HCT116 (cell line): ENCODE measurements at regions of chr9 and their contacts with region 1.

Region 1: GRCh38 chr9:83219152-83219923 is 156.4 kb upstream of the RASEF start:
- DNase-seq: peak; percentile 47
- ATAC-seq: peak; percentile 97
- H3K4me3 ChIP-seq: peak overlapping the region; percentile 54 to 66
- H3K27ac ChIP-seq: no peak overlapping the region
- H3K4me1 ChIP-seq: peaks cover 3 to 18% of the 10 kb centered on the region in 2 experiments; a peak in 2 of 4 replicates
- H3K27me3 ChIP-seq: peaks cover 9% of the 10 kb centered on the region; the same call in 1 of the 2 replicates
- CTCF ChIP-seq: peak; percentile 53 to 57 (median 56); a peak in 5 of 6 replicates
- POLR2A ChIP-seq: no peak
- RAD21 ChIP-seq: peak; percentile 67

Region 2: GRCh38 chr9:83231033-83231432 is 11.7 kb after region 1 on chr9:
- CTCF ChIA-PET with region 1: interaction called, 30 read pairs
- POLR2A ChIA-PET with region 1: no interaction called
- RAD21 ChIA-PET with region 1: interaction called in 1 of 2 experiments, 4 read pairs
- intact Hi-C with region 1: no loop called
- DNase-seq: peak; percentile 40
- ATAC-seq: peak; percentile 87
- H3K4me3 ChIP-seq: no peak overlapping the region
- H3K27ac ChIP-seq: no peak overlapping the region
- H3K4me1 ChIP-seq: no peaks in the 10 kb centered on the region
- H3K27me3 ChIP-seq: no peaks in the 10 kb centered on the region
- CTCF ChIP-seq: peak; percentile 63 to 92 (median 67)
- POLR2A ChIP-seq: no peak
- RAD21 ChIP-seq: peak; percentile 36

Region 3: DNA sequence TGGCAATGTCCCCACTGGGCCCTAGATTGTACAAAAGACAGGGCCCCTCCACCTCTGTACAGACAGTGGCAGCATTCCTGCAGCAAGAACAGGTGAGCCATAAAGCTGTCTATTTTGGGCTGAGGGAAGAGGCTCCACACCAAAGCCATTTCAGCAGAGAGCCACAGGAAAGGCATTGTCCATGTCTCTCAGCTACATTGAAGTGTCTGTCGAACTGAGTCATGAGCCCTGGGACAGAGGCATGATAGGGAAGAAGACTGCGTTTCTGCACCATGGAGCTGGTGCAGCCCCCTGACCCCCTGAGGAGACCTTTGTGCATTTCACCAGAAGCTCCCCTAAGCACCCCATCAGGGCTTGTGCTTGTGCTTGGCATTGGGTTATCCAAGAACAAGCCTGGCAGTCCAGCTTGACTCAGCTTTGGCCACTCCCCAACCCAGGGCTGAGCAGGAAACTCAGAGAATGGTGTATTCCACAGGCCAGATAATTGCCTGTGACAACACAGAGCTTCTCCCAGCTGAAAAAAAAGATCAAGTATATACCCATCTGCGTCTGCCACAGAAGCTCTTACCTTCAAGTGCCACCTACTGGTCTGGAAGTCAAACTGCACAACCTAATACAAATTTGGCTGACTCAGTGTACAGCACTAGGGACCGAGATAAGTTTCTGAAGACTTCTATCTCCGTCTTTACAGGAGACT is 324.8 kb after region 1 on chr9:
- CTCF ChIA-PET with region 1: interaction called, 15 read pairs
- POLR2A ChIA-PET with region 1: no interaction called
- RAD21 ChIA-PET with region 1: interaction called in 1 of 2 experiments, 3 read pairs
- intact Hi-C with region 1: loop called (anchors 5 kb)
- DNase-seq: peak; percentile 42
- ATAC-seq: peak; percentile 99
- H3K4me3 ChIP-seq: no peak overlapping the region
- H3K27ac ChIP-seq: no peak overlapping the region
- H3K4me1 ChIP-seq: peaks cover 0 to under 1% of the 10 kb centered on the region in 2 experiments; a peak in 2 of 4 replicates
- H3K27me3 ChIP-seq: no peaks in the 10 kb centered on the region
- CTCF ChIP-seq: peak; percentile 56 to 78 (median 70); a peak in 5 of 6 replicates
- POLR2A ChIP-seq: no peak
- RAD21 ChIP-seq: peak; percentile 74

Region 4: GRCh38 chr9:83596896-83597504 is 377.7 kb after region 1 on chr9:
- CTCF ChIA-PET with region 1: interaction called, 3 read pairs
- POLR2A ChIA-PET with region 1: no interaction called
- RAD21 ChIA-PET with region 1: no interaction called
- intact Hi-C with region 1: loop called (anchors 2 kb)
- DNase-seq: peak; percentile 27
- ATAC-seq: peak; percentile 81
- H3K4me3 ChIP-seq: no peak overlapping the region
- H3K27ac ChIP-seq: no peak overlapping the region
- H3K4me1 ChIP-seq: no peaks in the 10 kb centered on the region
- H3K27me3 ChIP-seq: no peaks in the 10 kb centered on the region
- CTCF ChIP-seq: peak; percentile 48 to 86 (median 81); a peak in 5 of 6 replicates
- POLR2A ChIP-seq: no peak
- RAD21 ChIP-seq: peak; percentile 71

Region 5: DNA sequence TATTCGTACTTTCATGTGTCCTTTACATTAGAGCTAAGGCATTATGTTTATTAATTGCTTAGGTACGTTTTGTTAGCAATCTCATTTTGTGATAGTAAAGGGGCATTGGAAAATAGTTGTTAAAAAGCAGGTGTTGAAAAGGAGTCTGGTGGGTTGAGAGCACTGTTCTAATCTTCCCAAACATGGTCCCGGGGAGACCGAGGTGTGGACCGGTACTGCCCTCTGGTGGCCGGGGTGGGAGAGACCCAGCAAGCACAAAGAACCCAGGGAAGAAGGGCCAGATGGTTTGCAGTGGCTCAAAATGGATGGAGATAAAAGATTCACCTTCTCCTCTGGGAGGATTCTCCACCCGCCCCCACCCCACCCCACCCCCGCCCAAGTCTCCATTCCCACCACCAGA is 429.7 kb after region 1 on chr9:
- CTCF ChIA-PET with region 1: interaction called, 14 read pairs
- POLR2A ChIA-PET with region 1: no interaction called
- RAD21 ChIA-PET with region 1: no interaction called
- intact Hi-C with region 1: no loop called
- DNase-seq: peak; percentile 6
- ATAC-seq: peak; percentile 92
- H3K4me3 ChIP-seq: no peak overlapping the region
- H3K27ac ChIP-seq: no peak overlapping the region
- H3K4me1 ChIP-seq: no peaks in the 10 kb centered on the region
- H3K27me3 ChIP-seq: no peaks in the 10 kb centered on the region
- CTCF ChIP-seq: peak; percentile 36 to 83 (median 81); a peak in 5 of 6 replicates
- POLR2A ChIP-seq: no peak
- RAD21 ChIP-seq: peak; percentile 64